ENCODE measurements at regions of chr14 and their contacts with region 1.

Region 1: GRCh38 chr14:32469388-32470160 is 140.5 kb downstream of the AKAP6 start:
- DNase-seq: no peak
- H3K4me3 ChIP-seq: no peak overlapping the region
- H3K27ac ChIP-seq: peak overlapping the region; percentile 65 to 83
- H3K4me1 ChIP-seq: peaks cover 5 to 35% of the 10 kb centered on the region in 2 donors
- H3K27me3 ChIP-seq: no peaks in the 10 kb centered on the region
- CTCF ChIP-seq: peak; percentile 23 to 59 (median 51)

Region 2: DNA sequence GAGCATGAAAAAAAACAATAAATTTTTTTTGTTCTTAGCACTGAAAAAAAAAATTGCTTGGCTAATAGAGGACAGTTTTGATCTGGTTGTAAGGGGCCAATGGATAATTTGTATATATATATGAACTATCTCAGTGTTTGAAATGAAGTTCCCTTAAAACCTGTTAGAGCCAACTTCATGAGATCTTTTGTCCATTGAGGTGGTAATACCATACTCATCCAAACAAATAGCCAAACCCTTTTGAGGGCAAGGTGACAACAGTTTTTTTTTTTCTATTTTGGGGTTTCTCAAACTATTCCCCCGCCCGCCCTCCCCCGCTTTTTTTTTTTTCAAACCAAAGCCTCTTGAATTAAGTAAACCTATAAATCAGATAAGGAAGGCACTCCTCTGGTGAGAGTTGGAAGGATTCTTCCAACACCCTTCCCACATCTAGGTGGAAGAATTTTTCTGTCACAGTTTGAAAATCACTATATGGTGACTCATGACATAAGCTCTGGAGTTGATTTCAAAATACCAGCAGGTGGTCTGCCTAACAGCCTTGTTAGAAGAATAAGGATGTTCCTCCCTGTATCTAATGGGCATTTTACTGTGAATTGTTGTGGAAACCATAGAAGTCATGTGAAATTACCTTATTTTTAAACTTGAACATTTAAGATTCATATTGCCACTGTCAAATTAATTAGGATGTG is 382.3 kb before region 1 on chr14:
- intact Hi-C with region 1: no loop called
- DNase-seq: no peak
- H3K4me3 ChIP-seq: no peak overlapping the region
- H3K27ac ChIP-seq: no peak overlapping the region
- H3K4me1 ChIP-seq: peaks cover 0 to 20% of the 10 kb centered on the region in 2 donors
- H3K27me3 ChIP-seq: no peaks in the 10 kb centered on the region
- CTCF ChIP-seq: no peak

Region 3: GRCh38 chr14:32202998-32203882 is 266.3 kb before region 1 on chr14 and contains the start of gene RNU6-8:
- intact Hi-C with region 1: loop called (anchors 5 kb)
- DNase-seq: peak; percentile 40 to 91
- H3K4me3 ChIP-seq: peak within 1 kb of the TSS; percentile 72 to 75
- H3K27ac ChIP-seq: peak within 1 kb of the TSS; percentile 69 to 75
- H3K4me1 ChIP-seq: no peaks in the 10 kb centered on the region
- H3K27me3 ChIP-seq: no peaks in the 10 kb centered on the region
- CTCF ChIP-seq: no peak
- total RNA-seq, gene RNU6-8: not detected

Measured in ascending aorta (tissue), 2 donors.